ENCODE measurements at regions of chr6 and their contacts with region 1.

Region 1: DNA sequence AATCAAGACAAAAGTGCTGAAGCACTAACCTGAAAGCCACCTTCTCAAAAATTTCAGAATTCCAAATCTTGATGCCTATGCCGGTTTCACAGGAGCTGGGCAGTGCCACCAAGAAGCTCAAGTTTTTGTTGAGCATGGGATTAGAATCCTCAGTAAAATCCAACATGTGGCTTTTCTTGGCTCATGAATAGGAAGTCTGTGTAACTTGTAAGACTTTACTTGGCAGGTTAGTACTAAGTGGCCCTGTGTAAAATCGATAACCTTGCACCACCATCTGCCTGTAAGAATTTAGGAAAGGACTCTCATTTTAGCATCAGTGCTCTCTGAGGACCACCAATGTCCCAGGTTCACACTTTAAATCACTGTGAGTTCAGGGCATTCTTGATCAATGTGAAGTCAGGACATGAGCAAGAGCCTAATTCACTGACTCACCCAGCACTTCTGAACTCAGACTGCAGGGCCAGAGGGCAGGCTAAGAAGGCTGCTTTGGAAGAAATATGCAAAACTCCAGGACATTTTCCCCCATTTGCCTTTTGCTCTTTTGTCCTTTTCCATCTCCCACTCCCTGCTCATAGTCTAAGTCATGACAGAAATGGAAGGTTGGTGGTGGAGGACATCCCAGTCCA is 113.2 kb downstream of the EDN1 start:
- DNase-seq: peak; percentile 56
- H3K4me3 ChIP-seq: no peak overlapping the region
- H3K27ac ChIP-seq: no peak overlapping the region
- H3K4me1 ChIP-seq: peaks cover 17% of the 10 kb centered on the region
- H3K27me3 ChIP-seq: no peaks in the 10 kb centered on the region
- CTCF ChIP-seq: peak; percentile 4 to 5

Region 2: DNA sequence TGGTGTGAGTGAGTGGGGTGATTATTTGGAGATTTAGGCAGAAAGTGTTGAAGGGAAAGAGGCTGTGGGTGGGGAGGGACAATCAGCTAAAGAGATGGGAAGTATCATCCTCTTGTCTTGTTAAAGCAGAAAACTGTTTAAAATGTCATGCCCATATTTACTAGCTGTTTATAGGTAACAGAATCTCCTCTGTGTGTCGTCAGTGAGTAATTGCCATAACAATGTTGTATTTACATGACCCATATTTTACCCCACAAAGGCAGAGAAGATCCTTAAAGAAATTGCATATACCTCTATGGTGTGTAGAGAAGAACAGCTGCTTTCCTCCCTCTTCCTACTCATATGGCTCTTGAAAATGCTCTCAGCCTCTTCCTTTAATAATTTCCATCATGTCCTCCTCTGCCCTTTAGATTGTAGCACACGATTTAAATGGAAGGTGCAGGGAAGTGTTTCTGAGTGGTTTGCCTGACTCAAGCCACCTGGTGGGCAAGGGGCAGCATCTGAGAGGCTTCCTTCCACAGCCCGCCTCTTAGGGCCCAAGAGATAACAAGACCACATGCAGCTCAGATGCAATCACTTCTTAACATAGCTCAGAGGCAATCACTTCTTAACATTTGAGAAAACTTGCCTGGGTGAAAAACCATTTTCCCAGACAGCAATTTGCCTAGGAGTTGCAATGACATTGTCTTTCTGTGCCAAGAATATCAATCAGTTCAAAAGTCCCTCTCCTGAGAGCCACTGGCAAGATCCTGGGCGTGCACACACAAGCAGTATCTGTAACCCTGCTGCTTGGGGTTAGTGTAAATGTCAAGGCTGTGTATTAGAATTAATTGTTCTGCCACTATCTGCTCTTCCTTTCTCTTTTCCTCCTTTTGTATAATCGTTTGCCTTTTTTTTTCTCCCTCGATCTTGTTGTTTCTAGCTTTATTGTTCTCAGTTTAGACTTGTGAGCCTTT is 157.3 kb before region 1 on chr6:
- CTCF ChIA-PET with region 1: no interaction called
- dilution Hi-C with region 1: no loop called
- in situ Hi-C with region 1: no loop called
- intact Hi-C with region 1: no loop called
- DNase-seq: peak; percentile 38
- H3K4me3 ChIP-seq: no peak overlapping the region
- H3K27ac ChIP-seq: no peak overlapping the region
- H3K4me1 ChIP-seq: peaks cover 21% of the 10 kb centered on the region
- H3K27me3 ChIP-seq: no peaks in the 10 kb centered on the region
- CTCF ChIP-seq: no peak

Region 3: DNA sequence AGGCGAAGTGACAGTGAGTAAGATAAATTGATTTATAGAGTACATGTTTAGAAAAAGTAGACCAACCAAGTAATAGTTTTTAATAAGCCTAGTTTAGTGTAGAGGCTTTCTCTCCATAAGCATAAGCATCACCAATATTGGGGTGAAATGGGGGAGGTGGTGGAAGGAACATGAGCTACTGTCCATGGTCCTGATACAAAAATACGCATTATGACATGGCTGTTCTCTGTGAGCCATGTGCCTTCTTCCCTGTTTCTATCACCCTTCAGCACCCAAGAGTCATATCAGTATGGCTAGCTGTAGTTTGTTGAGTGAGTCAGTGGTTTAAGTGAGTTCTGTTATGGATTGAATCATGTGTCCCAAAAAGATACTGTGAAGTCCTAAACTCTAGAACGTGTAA is 37.7 kb after region 1 on chr6:
- CTCF ChIA-PET with region 1: no interaction called
- dilution Hi-C with region 1: no loop called
- in situ Hi-C with region 1: no loop called
- intact Hi-C with region 1: loop called (anchors 2 kb)
- DNase-seq: peak; percentile 36
- H3K4me3 ChIP-seq: no peak overlapping the region
- H3K27ac ChIP-seq: no peak overlapping the region
- H3K4me1 ChIP-seq: peaks cover 5% of the 10 kb centered on the region
- H3K27me3 ChIP-seq: no peaks in the 10 kb centered on the region
- CTCF ChIP-seq: no peak